Cardiac septum (tissue), 1 donor: ENCODE measurements at regions of chr2 and their contacts with region 1.

Region 1: DNA sequence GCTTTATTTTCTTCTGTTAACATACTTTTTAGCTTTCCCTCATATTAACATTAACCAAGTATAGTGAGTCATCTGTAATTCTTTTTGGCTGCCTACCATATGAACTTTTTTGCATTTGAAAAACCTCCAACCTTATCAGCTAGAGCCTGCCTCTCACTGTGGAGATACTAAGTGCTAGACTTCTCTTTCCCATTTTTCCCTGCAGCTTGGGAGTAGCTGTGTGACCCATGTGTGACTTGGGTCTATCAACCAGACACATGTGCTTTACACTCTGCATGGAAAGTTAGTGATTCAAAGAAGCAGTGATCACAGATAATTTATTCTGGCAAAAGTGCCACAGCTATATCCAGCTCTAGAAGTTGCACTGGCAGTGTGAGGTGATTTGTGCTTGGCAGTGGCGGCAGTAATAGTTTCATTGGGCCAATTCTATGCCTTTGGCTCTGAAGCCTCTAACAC is 36.3 kb downstream of the PREPL start:
- DNase-seq: no peak

Region 2: DNA sequence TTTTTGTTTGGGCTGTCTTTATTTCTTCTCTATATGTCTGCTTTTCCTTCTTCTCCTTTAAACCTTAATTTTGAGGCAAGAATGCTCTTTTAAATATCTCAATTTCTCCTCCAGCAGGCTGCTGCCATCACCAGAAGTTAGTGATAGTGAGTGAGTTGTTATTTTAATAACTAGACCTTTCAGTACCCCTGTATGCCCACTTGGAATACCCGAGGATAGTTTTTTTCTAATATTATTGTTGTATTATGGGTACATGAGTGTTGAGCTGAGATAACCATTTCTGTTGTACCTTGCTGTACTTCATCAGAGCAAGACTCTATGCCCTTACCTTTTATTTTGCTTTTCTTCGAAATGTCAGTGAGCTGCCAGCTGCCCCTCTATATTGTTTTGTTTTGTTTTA is 106.2 kb before region 1 on chr2:
- intact Hi-C with region 1: no loop called
- DNase-seq: no peak

Region 3: GRCh38 chr2:44254023-44254422 is 71.0 kb before region 1 on chr2:
- intact Hi-C with region 1: no loop called
- DNase-seq: no peak

Region 4: GRCh38 chr2:44361330-44362206 is 36.6 kb after region 1 on chr2 and contains the starts of genes CAMKMT and PREPL:
- intact Hi-C with region 1: loop called (anchors 2 kb)
- DNase-seq: peak; percentile 100
- total RNA-seq, gene CAMKMT: 5.6 TPM
- total RNA-seq, gene PREPL: 82.1 TPM

Region 5: DNA sequence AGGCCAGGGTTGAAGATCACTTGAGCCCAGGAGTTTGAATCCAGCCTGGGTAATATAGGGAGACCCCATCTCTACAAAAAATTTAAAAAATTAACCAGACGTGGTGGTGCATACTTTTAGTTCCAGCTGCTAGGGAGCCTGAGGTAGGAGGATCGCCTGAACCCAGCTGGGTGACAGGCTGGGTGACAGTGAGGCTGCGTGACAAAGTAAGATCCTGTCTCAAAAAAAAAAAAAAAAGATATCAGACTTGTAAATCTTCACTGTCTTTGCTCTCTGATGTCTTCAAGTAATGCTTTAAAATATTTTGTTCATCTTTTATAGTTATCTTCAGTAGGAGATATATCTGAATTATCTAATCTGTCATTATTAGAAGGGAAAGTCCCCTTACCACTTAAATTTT is 47.2 kb after region 1 on chr2:
- intact Hi-C with region 1: no loop called
- DNase-seq: no peak